ENCODE measurements at regions of chr7 and their contacts with region 1.

Region 1: DNA sequence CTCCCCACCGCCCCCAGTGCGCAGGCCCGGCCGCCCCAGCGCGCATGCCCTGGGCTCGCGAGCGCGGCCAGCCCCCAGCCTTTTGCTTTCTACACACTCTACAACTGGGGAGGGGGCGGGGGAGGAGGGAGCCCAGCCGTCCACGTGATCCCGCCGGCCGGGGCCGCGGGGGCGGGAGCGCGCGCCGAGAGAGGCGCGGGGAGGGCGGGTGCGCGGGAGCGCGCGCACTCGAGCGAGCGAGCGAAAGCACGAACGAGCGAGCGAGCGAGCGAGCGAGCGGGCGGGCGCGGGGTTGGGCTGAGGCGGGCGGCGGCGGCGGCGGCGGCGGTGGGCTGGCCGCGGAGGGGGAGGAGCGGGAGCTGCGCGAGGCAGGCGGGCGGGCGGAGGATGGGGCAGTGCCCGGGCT is at the start of gene AUTS2:
- DNase-seq: peak; percentile 89
- ATAC-seq: peak; percentile 91
- total RNA-seq, gene AUTS2: 10.5 to 15.2 TPM

Region 2: GRCh38 chr7:69651101-69651590 is 53.1 kb after region 1 on chr7:
- intact Hi-C with region 1: no loop called
- DNase-seq: peak; percentile 22
- ATAC-seq: peak; percentile 54 to 87

Region 3: GRCh38 chr7:69814421-69814962 is 216.4 kb after region 1 on chr7:
- intact Hi-C with region 1: loop called in 1 of 2 experiments (anchors 10 kb)
- DNase-seq: peak; percentile 30
- ATAC-seq: peak; percentile 73 to 84

Region 4: GRCh38 chr7:69893906-69894305 is 295.8 kb after region 1 on chr7:
- intact Hi-C with region 1: loop called in 1 of 2 experiments (anchors 10 kb)
- DNase-seq: no peak
- ATAC-seq: peak in 1 of 2 donors; percentile 23

Measured in left cardiac atrium (tissue), 4 donors.